GM10248 (cell line): ENCODE measurements at regions of chr12 and their contacts with region 1.

Region 1: DNA sequence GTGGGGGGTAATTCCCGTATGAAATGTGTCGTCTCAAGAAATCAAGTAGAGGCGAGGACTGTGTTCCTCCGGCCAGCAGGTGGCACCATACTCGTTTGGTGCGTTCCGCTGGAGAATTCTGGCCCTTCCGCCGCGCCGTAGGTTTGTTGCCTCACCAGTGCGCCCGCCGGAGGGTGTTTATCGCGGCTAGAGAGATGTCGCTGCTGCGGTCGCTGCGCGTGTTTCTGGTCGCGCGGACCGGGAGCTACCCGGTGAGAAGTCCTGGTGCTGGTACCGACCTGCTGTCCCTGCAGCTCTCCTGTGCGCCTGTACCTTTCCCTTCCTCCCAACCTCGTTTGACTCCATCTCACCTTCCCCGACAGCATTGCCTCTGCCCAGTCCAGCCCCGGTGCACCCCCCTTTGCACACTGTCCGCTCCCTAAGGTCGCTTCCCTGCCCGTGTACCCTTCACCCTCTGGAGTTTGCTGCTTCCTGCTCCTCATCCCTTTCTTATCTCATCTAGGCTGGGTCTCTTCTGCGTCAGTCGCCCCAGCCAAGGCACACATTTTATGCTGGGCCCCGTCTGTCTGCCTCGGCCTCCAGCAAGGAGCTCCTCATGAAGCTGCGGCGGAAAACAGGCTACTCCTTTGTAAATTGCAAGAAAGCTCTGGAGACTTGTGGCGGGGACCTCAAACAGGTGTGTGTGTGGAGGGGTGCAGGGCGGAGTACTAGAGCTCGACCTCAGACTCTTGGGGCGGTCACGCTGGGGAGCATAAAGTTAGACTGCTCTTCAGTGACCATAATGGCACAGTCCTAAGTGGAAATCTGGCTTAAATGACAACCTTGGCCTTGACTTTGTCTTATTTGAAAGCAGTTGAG is at the start of gene TSFM:
- DNase-seq: peak; percentile 90
- CTCF ChIP-seq: peak; percentile 94

Region 2: GRCh38 chr12:57754411-57755193 is 28.2 kb before region 1 on chr12 and contains the start of gene MARCHF9:
- CTCF ChIA-PET with region 1: interaction called, 11 read pairs
- POLR2A ChIA-PET with region 1: no interaction called
- DNase-seq: peak; percentile 86
- CTCF ChIP-seq: no peak

Region 3: GRCh38 chr12:57771708-57772428 is 11.0 kb before region 1 on chr12 and contains the start of gene METTL1:
- CTCF ChIA-PET with region 1: interaction called, 39 read pairs
- POLR2A ChIA-PET with region 1: interaction called, 3 read pairs
- DNase-seq: peak; percentile 96
- CTCF ChIP-seq: no peak

Region 4: GRCh38 chr12:57803319-57803893 is 20.6 kb after region 1 on chr12:
- CTCF ChIA-PET with region 1: interaction called, 85 read pairs
- POLR2A ChIA-PET with region 1: no interaction called
- DNase-seq: peak; percentile 42
- CTCF ChIP-seq: peak; percentile 64

Region 5: DNA sequence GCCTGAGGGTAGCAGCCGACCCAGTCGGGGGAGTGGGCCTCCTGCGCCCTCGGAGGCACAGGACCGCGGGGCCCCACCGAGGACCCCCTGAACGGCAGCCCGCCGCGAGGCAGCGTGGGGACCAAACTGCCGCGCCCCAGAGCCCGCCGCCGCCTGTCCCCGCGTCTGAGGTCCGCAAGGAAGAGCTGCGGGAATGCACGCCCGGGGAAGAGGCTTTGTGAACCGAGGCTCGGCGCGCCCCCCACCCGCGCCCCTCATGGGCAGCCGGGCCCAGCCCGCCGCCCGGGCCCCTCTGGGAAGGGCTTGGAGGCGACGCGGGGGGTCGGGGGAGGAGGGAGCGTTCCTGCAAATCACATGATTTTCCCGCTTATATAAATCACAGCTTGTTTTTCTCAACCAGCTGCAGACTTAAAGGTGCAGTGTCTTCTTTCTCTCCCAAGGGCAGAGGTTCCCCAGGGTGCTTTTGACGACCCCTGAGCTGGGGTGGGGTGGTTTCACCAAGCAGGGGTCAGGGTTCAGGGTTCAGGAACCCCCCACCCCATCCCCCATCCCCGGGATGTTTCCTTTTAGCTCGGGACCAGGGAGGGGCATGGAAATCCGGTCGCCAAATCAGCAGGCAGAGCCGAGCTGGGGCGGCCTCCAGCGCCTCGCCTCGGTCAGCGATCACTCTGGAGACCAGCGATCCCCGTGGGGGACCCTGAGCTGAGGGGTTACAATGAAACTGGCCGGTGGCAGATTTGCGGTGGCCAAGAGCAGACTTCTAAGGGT is 113.8 kb after region 1 on chr12:
- CTCF ChIA-PET with region 1: interaction called, 14 read pairs
- POLR2A ChIA-PET with region 1: no interaction called
- DNase-seq: no peak
- CTCF ChIP-seq: no peak